T-cell (primary cell): ENCODE measurements at regions of chr11 and their contacts with region 1.

Region 1: GRCh38 chr11:133927690-133928627 is 28.8 kb downstream of the IGSF9B start:
- DNase-seq: peak; percentile 5 to 76 (median 51)
- ATAC-seq: peak; percentile 70 to 81 (median 76)
- H3K4me3 ChIP-seq: peak overlapping the region; percentile 41 to 65
- H3K4me3 Mint-ChIP-seq: peak overlapping the region; percentile 79 to 85 (median 81)
- H3K27ac ChIP-seq: peak overlapping the region; percentile 41
- H3K27ac Mint-ChIP-seq: peak overlapping the region; percentile 90 to 92
- H3K4me1 ChIP-seq: peaks cover 20 to 29% of the 10 kb centered on the region in 2 experiments
- H3K4me1 Mint-ChIP-seq: peaks cover 20 to 30% (median 22%) of the 10 kb centered on the region in 3 donors
- H3K27me3 ChIP-seq: peaks cover 0 to 2% of the 10 kb centered on the region in 2 experiments
- H3K27me3 Mint-ChIP-seq: peaks cover 0 to 1% of the 10 kb centered on the region in 2 donors

Region 2: GRCh38 chr11:133605482-133605881 is 322.5 kb before region 1 on chr11:
- CTCF ChIA-PET with region 1: no interaction called
- POLR2A ChIA-PET with region 1: no interaction called
- DNase-seq: no peak
- ATAC-seq: no peak
- H3K4me3 ChIP-seq: no peak overlapping the region
- H3K4me3 Mint-ChIP-seq: no peak overlapping the region
- H3K27ac ChIP-seq: no peak overlapping the region
- H3K27ac Mint-ChIP-seq: no peak overlapping the region
- H3K4me1 ChIP-seq: no peaks in the 10 kb centered on the region
- H3K4me1 Mint-ChIP-seq: no peaks in the 10 kb centered on the region
- H3K27me3 ChIP-seq: peaks cover 0 to 5% of the 10 kb centered on the region in 2 experiments
- H3K27me3 Mint-ChIP-seq: peaks cover 0 to 5% of the 10 kb centered on the region in 2 donors

Region 3: DNA sequence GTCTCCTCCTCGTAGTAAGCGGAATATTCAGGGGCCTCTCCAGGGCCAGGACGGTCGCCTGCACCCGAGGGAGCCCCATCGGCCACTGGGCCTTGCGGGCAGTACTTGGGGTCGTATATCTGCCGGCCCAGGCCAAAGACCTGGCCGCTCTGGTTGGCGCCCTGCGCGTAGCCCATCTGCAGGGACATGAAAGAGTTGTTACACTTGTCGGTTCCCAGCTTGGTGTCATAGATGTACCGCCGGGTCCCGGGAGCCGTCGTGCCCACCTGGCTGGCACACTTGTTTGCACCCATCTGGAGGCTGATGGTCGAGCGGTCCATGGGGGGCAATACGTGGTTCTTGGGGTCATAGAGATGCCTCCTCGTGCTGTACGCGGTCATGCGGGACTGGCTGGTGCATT is 63.2 kb before region 1 on chr11:
- CTCF ChIA-PET with region 1: no interaction called
- POLR2A ChIA-PET with region 1: no interaction called
- DNase-seq: no peak
- ATAC-seq: no peak
- H3K4me3 ChIP-seq: no peak overlapping the region
- H3K4me3 Mint-ChIP-seq: no peak overlapping the region
- H3K27ac ChIP-seq: no peak overlapping the region
- H3K27ac Mint-ChIP-seq: no peak overlapping the region
- H3K4me1 ChIP-seq: no peaks in the 10 kb centered on the region
- H3K4me1 Mint-ChIP-seq: no peaks in the 10 kb centered on the region
- H3K27me3 ChIP-seq: peaks cover 0 to 20% of the 10 kb centered on the region in 2 experiments
- H3K27me3 Mint-ChIP-seq: peaks cover 22 to 26% of the 10 kb centered on the region in 2 donors

Region 4: GRCh38 chr11:133886029-133886428 is 41.9 kb before region 1 on chr11:
- CTCF ChIA-PET with region 1: no interaction called
- POLR2A ChIA-PET with region 1: no interaction called
- DNase-seq: no peak
- ATAC-seq: no peak
- H3K4me3 ChIP-seq: no peak overlapping the region
- H3K4me3 Mint-ChIP-seq: no peak overlapping the region
- H3K27ac ChIP-seq: no peak overlapping the region
- H3K27ac Mint-ChIP-seq: no peak overlapping the region
- H3K4me1 ChIP-seq: no peaks in the 10 kb centered on the region
- H3K4me1 Mint-ChIP-seq: no peaks in the 10 kb centered on the region
- H3K27me3 ChIP-seq: peaks cover 0 to 27% of the 10 kb centered on the region in 2 experiments
- H3K27me3 Mint-ChIP-seq: peaks cover 37 to 45% of the 10 kb centered on the region in 2 donors

Region 5: DNA sequence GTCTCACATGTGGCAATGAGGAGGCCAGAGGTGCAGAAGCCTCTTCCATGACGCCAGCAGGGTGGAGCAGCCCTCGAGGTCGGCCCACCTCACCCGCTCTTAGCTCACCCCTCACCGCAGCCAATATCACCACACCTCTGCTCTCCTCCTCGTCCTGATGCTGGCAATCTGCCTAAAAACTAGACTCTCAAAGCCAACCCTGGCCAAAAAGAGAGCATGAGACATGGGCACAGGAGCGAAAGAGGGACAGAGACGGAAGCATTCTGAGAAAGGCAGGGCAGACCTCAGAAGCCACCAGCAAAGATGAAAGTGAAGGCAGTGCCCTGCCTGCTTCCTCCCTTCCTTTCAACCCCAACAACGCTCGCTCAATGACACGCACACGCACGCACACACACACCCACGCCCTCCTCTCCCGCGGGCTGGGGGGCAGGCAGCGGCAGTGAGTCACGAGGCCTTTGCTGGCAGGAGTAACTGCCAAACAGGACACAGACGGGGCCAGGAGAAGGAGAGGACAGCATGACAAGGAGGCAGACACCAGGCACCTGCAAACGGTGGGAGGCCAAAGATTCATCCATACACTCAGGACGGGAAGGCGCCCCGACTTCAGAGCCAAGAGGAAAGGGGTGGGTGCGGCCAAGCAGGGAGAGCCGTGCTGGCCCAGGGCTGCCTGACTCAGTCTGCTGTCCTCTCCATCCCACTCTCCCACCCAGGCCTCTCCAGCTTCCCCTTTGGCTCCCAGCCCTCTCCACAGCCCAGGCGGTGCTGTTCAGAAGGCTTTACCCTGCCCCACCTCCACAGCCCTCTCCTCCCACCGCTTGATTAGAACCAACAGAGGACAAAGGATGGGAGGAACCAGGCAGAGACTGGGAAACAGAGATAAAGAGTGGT is 17.4 kb after region 1 on chr11:
- CTCF ChIA-PET with region 1: interaction called, 4 to 10 read pairs
- POLR2A ChIA-PET with region 1: no interaction called
- DNase-seq: peak; percentile 55 to 91 (median 75)
- ATAC-seq: peak; percentile 79 to 85 (median 82)
- H3K4me3 ChIP-seq: peak overlapping the region; percentile 40 to 44
- H3K4me3 Mint-ChIP-seq: peak overlapping the region; percentile 75 to 79 (median 79)
- H3K27ac ChIP-seq: peak overlapping the region; percentile 82
- H3K27ac Mint-ChIP-seq: peak overlapping the region; percentile 95 to 97
- H3K4me1 ChIP-seq: peaks cover 48 to 64% of the 10 kb centered on the region in 2 experiments
- H3K4me1 Mint-ChIP-seq: peaks cover 61 to 83% (median 72%) of the 10 kb centered on the region in 3 donors
- H3K27me3 ChIP-seq: peaks cover 0 to 30% of the 10 kb centered on the region in 2 experiments
- H3K27me3 Mint-ChIP-seq: no peaks in the 10 kb centered on the region

Region 6: DNA sequence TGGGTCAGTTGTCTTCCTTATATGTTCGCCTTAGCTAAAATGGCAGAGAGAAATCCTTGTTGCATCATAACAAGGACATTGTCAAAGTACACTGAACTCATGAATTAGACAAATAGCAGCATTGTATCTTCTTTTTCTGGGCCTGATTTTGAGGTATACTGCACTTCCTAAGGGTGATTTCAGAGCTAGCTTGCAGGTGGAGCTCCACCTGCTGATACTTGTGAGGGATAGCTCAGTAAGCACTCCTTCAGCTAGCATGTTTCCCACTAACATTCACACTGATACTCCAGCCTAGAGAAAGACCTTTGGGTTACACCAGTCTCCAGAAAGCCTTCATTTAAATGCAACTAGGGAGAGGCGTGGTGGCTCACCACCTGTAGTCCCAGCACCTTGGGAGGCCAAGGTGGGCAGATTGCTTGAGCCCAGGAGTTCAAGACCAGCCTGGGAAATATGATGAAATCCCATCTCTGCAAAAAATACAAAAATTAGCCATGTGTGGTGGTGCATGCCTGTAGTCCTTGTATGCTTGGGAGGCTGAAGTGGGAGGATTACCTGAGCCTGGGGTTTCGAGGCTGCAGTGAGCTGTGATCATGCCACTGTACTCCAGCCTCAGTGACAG is 170.7 kb after region 1 on chr11:
- CTCF ChIA-PET with region 1: interaction called in 1 of 2 experiments, 11 read pairs
- POLR2A ChIA-PET with region 1: no interaction called
- DNase-seq: peak in 1 of 35 experiments; percentile 30
- ATAC-seq: peak in 2 of 4 experiments; percentile 36 to 60
- H3K4me3 ChIP-seq: no peak overlapping the region
- H3K4me3 Mint-ChIP-seq: no peak overlapping the region
- H3K27ac ChIP-seq: no peak overlapping the region
- H3K27ac Mint-ChIP-seq: no peak overlapping the region
- H3K4me1 ChIP-seq: no peaks in the 10 kb centered on the region
- H3K4me1 Mint-ChIP-seq: peaks cover 0 to 5% (median 3%) of the 10 kb centered on the region in 3 donors
- H3K27me3 ChIP-seq: no peaks in the 10 kb centered on the region
- H3K27me3 Mint-ChIP-seq: no peaks in the 10 kb centered on the region

Region 7: DNA sequence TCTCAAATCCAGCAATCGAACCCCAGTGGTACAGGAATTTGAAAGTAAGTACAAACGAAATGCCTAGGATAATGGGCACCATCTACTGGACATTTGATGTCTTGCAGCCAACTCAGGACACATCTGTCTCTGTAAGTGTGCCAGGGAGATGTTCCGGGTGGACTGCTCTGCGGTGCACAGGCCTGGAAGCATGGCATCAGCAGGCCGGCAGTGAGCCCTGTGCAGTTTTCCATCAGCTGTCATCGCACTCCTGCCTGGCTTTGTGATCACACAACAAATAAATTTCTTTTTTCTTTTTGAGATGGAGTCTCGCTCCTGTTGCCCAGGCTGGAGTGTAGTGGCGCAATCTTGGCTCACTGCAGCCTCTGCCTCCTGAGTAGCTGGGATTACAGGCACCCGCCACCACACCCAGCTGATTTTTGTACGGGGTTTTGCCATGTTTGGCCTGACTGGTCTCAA is 211.9 kb after region 1 on chr11:
- CTCF ChIA-PET with region 1: interaction called in 1 of 2 experiments, 12 read pairs
- POLR2A ChIA-PET with region 1: no interaction called
- DNase-seq: peak in 27 of 35 experiments; percentile 7 to 75 (median 27)
- ATAC-seq: peak; percentile 54 to 65 (median 64)
- H3K4me3 ChIP-seq: no peak overlapping the region
- H3K4me3 Mint-ChIP-seq: no peak overlapping the region
- H3K27ac ChIP-seq: no peak overlapping the region
- H3K27ac Mint-ChIP-seq: no peak overlapping the region
- H3K4me1 ChIP-seq: peaks cover 0 to 3% of the 10 kb centered on the region in 2 experiments
- H3K4me1 Mint-ChIP-seq: peaks cover 5 to 8% (median 6%) of the 10 kb centered on the region in 3 donors
- H3K27me3 ChIP-seq: no peaks in the 10 kb centered on the region
- H3K27me3 Mint-ChIP-seq: no peaks in the 10 kb centered on the region

Region 8: GRCh38 chr11:134656861-134657540 is 729.0 kb after region 1 on chr11:
- CTCF ChIA-PET with region 1: no interaction called
- POLR2A ChIA-PET with region 1: no interaction called
- DNase-seq: peak in 20 of 35 experiments; percentile 5 to 60 (median 30)
- ATAC-seq: peak in 1 of 4 experiments; percentile 70
- H3K4me3 ChIP-seq: no peak overlapping the region
- H3K4me3 Mint-ChIP-seq: no peak overlapping the region
- H3K27ac ChIP-seq: no peak overlapping the region
- H3K27ac Mint-ChIP-seq: peak overlapping the region in 1 of 2 donors; percentile 22
- H3K4me1 ChIP-seq: peaks cover 0 to 21% of the 10 kb centered on the region in 2 experiments
- H3K4me1 Mint-ChIP-seq: peaks cover 13 to 23% (median 22%) of the 10 kb centered on the region in 3 donors
- H3K27me3 ChIP-seq: peaks cover 0 to 31% of the 10 kb centered on the region in 2 experiments
- H3K27me3 Mint-ChIP-seq: peaks cover 26 to 31% of the 10 kb centered on the region in 2 donors